Activated naive CD4-positive, alpha-beta T cell treated with anti-CD3 and anti-CD28 coated beads for 36 hours (primary cell): ENCODE measurements at regions of chr14 and their contacts with region 1.

Region 1: GRCh38 chr14:95527387-95528002 is 7.4 kb upstream of the GLRX5 start:
- DNase-seq: peak; percentile 81
- H3K4me3 Mint-ChIP-seq: peak overlapping the region; percentile 16
- H3K27ac Mint-ChIP-seq: peak overlapping the region; percentile 79
- H3K4me1 Mint-ChIP-seq: peaks cover 79% of the 10 kb centered on the region
- H3K27me3 Mint-ChIP-seq: no peaks in the 10 kb centered on the region

Region 2: DNA sequence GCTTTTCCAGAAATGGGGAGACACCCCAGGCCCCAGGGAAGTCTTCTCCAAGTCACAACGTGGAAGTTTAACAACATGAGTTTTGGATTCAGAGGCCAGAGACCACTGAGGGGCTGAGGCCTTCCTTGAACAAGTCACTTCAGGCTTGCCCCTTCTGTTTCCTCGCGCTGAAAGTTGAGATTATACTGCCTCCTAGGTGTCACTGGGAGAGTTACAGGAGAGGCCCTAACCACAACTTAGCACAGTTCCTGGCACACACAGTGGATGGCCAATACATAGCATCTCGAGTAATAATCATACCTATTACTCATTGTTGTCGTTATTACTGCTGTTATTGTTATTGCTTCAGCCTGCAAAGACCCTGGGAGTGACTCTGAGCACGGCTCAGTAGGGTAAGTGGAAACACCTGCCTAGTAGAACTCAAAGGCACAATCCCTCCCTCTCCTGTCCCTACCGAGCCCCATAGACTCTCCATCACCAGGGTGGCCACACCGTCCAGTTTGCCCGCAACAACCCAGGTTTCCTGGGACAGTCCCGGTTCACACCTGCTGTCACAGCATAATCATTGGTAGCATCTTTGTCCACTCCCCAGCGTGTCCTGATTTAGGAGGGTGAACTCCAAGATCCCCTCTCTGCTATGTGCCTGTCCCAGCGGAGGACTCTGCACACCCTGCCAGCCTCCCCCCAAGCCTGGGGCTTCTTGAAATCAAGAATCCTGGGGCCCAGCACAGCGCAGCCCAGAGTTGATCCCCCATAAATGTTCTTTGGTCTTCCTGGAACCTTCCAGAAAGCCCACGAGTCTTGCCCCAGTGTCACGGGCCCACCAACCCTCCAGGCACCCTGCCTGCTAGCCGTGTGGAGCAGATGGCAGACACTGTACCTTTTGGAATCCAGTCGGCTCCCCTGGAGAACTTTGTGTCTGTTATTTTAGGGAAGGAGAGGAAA is 96.0 kb before region 1 on chr14:
- CTCF ChIA-PET with region 1: interaction called, 8 read pairs
- intact Hi-C with region 1: loop called (anchors 1 kb)
- DNase-seq: peak; percentile 30
- H3K4me3 Mint-ChIP-seq: no peak overlapping the region
- H3K27ac Mint-ChIP-seq: no peak overlapping the region
- H3K4me1 Mint-ChIP-seq: no peaks in the 10 kb centered on the region
- H3K27me3 Mint-ChIP-seq: no peaks in the 10 kb centered on the region

Region 3: GRCh38 chr14:95452176-95452892 is 75.2 kb before region 1 on chr14:
- CTCF ChIA-PET with region 1: interaction called, 184 read pairs
- intact Hi-C with region 1: no loop called
- DNase-seq: peak; percentile 18
- H3K4me3 Mint-ChIP-seq: no peak overlapping the region
- H3K27ac Mint-ChIP-seq: no peak overlapping the region
- H3K4me1 Mint-ChIP-seq: peaks cover 3% of the 10 kb centered on the region
- H3K27me3 Mint-ChIP-seq: no peaks in the 10 kb centered on the region

Region 4: GRCh38 chr14:95483309-95484165 is 44.0 kb before region 1 on chr14:
- CTCF ChIA-PET with region 1: interaction called, 12 read pairs
- intact Hi-C with region 1: no loop called
- DNase-seq: no peak
- H3K4me3 Mint-ChIP-seq: no peak overlapping the region
- H3K27ac Mint-ChIP-seq: no peak overlapping the region
- H3K4me1 Mint-ChIP-seq: peaks cover 45% of the 10 kb centered on the region
- H3K27me3 Mint-ChIP-seq: no peaks in the 10 kb centered on the region

Region 5: DNA sequence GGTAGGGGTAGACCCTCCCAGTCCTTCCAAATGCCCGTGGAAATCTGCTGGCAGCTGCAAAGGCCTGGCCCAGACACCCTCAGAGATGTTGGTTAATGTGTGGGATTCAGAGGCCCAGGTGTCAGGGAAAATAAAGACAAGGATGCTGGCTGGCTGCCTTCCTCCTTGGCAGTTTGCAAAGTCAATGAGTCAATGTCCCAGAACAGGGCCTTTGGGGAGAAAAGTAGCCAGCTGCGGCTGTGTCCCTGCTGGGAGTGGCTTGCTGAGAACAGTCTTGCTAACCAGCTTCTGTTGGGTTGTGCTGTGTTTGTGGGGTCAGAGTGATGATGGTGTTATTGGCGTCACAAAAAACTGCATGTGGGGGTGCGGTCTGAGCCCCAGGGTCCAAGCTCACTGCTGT is 36.6 kb after region 1 on chr14:
- CTCF ChIA-PET with region 1: no interaction called
- intact Hi-C with region 1: no loop called
- DNase-seq: no peak
- H3K4me3 Mint-ChIP-seq: no peak overlapping the region
- H3K27ac Mint-ChIP-seq: no peak overlapping the region
- H3K4me1 Mint-ChIP-seq: no peaks in the 10 kb centered on the region
- H3K27me3 Mint-ChIP-seq: peaks cover 2% of the 10 kb centered on the region

Region 6: DNA sequence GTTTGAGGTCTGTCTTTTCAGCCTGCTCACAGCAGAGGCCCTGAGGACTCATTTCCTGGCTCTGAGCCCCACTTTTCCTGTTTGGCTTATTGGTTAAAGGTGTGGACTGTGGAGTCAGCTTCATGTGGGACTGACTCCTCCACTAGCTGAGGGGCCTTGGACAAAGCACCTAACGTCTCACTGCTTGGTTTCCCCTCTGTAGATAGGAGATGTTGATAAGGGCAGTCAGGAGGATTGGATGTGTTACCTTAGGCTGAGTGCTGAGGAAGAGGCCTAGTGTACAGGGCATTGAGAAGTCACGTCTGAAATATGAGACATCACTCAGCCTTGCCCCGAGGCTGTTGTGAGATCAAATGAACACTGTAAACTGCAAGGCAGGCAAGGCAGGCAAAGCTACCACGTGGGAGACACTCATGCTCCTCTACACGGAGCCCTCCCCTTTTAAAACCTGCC is 213.6 kb after region 1 on chr14:
- CTCF ChIA-PET with region 1: no interaction called
- intact Hi-C with region 1: no loop called
- DNase-seq: no peak
- H3K4me3 Mint-ChIP-seq: no peak overlapping the region
- H3K27ac Mint-ChIP-seq: no peak overlapping the region
- H3K4me1 Mint-ChIP-seq: peaks cover 7% of the 10 kb centered on the region
- H3K27me3 Mint-ChIP-seq: no peaks in the 10 kb centered on the region

Region 7: GRCh38 chr14:95784137-95784536 is 256.6 kb after region 1 on chr14:
- CTCF ChIA-PET with region 1: no interaction called
- intact Hi-C with region 1: no loop called
- DNase-seq: peak; percentile 22
- H3K4me3 Mint-ChIP-seq: no peak overlapping the region
- H3K27ac Mint-ChIP-seq: no peak overlapping the region
- H3K4me1 Mint-ChIP-seq: no peaks in the 10 kb centered on the region
- H3K27me3 Mint-ChIP-seq: peaks cover 4% of the 10 kb centered on the region